ENCODE measurements at regions of chr20 and their contacts with region 1.

Region 1: GRCh38 chr20:46363800-46364634 is 42.4 kb downstream of the ELMO2 start:
- DNase-seq: peak; percentile 88
- H3K4me3 ChIP-seq: peak overlapping the region; percentile 49 to 90 (median 67)
- H3K27ac ChIP-seq: peak overlapping the region; percentile 94
- H3K4me1 ChIP-seq: peaks cover 8% of the 10 kb centered on the region
- H3K27me3 ChIP-seq: no peaks in the 10 kb centered on the region
- CTCF ChIP-seq: no peak
- POLR2A ChIP-seq: peak; percentile 68

Region 2: GRCh38 chr20:45993197-45993951 is 370.6 kb before region 1 on chr20:
- CTCF ChIA-PET with region 1: no interaction called
- POLR2A ChIA-PET with region 1: no interaction called
- dilution Hi-C with region 1: no loop called
- intact Hi-C with region 1: no loop called
- DNase-seq: no peak
- H3K4me3 ChIP-seq: no peak overlapping the region
- H3K27ac ChIP-seq: no peak overlapping the region
- H3K4me1 ChIP-seq: no peaks in the 10 kb centered on the region
- H3K27me3 ChIP-seq: peaks cover 5 to 10% of the 10 kb centered on the region in 2 experiments
- CTCF ChIP-seq: no peak
- POLR2A ChIP-seq: no peak

Region 3: DNA sequence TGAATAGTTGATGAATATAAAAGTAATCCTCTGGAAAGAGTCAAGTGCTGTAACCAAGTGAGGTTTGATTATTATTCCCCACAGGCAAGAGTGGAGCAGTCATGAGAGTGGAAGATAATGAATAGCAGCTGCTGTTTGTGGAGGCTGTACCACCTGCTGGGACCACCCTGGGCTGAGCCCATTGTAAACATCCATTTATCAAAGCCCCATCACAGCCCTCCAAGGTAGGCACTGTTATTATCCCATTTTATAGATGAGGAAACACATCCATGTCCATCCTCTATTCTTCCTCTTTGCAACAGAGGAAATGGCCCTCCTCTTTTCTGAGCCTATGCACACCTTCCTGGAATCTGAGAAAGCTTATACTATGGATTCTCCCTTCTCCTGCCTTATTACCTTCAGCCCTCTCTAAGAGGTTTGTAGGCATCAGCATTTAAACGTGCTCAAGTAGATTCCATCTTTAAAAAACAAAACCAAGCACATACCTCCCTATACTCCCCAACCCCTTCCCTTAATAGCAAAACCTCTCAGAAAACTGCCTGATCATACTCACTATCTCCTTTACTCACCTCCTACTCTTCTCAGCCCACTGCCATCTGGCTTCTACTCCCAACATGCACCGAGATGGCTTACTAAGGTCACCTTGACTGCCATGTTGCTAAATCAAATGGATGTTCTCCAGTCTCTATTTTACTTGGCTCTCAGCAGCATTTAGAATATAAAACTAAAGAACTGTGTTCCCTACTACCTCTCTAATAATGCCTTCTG is 92.9 kb before region 1 on chr20:
- CTCF ChIA-PET with region 1: no interaction called
- POLR2A ChIA-PET with region 1: no interaction called
- dilution Hi-C with region 1: no loop called
- intact Hi-C with region 1: no loop called
- DNase-seq: no peak
- H3K4me3 ChIP-seq: no peak overlapping the region
- H3K27ac ChIP-seq: no peak overlapping the region
- H3K4me1 ChIP-seq: no peaks in the 10 kb centered on the region
- H3K27me3 ChIP-seq: no peaks in the 10 kb centered on the region
- CTCF ChIP-seq: no peak
- POLR2A ChIP-seq: no peak

Region 4: GRCh38 chr20:46406199-46406985 is 42.4 kb after region 1 on chr20 and contains the start of gene ELMO2:
- CTCF ChIA-PET with region 1: interaction called, 7 read pairs
- POLR2A ChIA-PET with region 1: interaction called, 9 read pairs
- dilution Hi-C with region 1: no loop called
- intact Hi-C with region 1: loop called (anchors 1 kb)
- DNase-seq: peak; percentile 97
- H3K4me3 ChIP-seq: peak within 1 kb of the TSS; percentile 69 to 81 (median 75)
- H3K27ac ChIP-seq: peak within 1 kb of the TSS; percentile 36
- H3K4me1 ChIP-seq: peaks cover 17% of the 10 kb centered on the region
- H3K27me3 ChIP-seq: peaks cover 2 to 6% of the 10 kb centered on the region in 2 experiments
- CTCF ChIP-seq: peak in 1 of 2 donors; percentile 9
- POLR2A ChIP-seq: no peak
- total RNA-seq, gene ELMO2: 42.1 and 43.5 TPM in 2 replicates

Region 5: DNA sequence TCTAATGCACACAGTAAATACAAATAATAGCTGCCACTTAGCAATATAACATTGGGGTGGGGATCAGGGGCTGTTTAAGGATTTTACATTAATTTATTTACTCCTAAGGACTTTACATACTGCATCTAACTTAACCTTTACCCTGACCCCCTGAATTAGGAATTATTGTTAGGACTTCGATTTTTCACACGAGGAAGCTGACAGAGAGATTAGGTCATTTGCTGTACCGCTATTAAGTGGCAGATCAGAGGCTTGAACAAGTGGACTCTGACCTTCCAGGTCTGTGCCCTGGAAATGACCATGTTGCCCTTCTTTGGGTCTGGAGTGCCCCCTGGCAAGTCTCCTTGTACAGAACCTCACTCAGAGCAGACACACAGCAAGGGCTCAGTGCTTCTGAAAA is 47.6 kb after region 1 on chr20:
- CTCF ChIA-PET with region 1: interaction called, 7 read pairs
- POLR2A ChIA-PET with region 1: interaction called, 9 read pairs
- dilution Hi-C with region 1: no loop called
- intact Hi-C with region 1: loop called (anchors 1 kb)
- DNase-seq: no peak
- H3K4me3 ChIP-seq: no peak overlapping the region
- H3K27ac ChIP-seq: no peak overlapping the region
- H3K4me1 ChIP-seq: peaks cover 8% of the 10 kb centered on the region
- H3K27me3 ChIP-seq: peaks cover 5 to 17% of the 10 kb centered on the region in 2 experiments
- CTCF ChIP-seq: no peak
- POLR2A ChIP-seq: no peak